ENCODE measurements at regions of chr22 and their contacts with region 1.

Region 1: GRCh38 chr22:42437488-42438292 is 5.5 kb upstream of the NFAM1 start:
- DNase-seq: peak; percentile 39
- ATAC-seq: peak; percentile 86
- H3K4me3 ChIP-seq: peak overlapping the region; percentile 46 to 53
- H3K27ac ChIP-seq: 0 out of 2 replicates have a peak overlapping the region, but pooled peaks have one; percentile 34
- H3K4me1 ChIP-seq: peaks cover 13% of the 10 kb centered on the region
- H3K27me3 ChIP-seq: no peaks in the 10 kb centered on the region
- CTCF ChIP-seq: peak; percentile 91

Region 2: DNA sequence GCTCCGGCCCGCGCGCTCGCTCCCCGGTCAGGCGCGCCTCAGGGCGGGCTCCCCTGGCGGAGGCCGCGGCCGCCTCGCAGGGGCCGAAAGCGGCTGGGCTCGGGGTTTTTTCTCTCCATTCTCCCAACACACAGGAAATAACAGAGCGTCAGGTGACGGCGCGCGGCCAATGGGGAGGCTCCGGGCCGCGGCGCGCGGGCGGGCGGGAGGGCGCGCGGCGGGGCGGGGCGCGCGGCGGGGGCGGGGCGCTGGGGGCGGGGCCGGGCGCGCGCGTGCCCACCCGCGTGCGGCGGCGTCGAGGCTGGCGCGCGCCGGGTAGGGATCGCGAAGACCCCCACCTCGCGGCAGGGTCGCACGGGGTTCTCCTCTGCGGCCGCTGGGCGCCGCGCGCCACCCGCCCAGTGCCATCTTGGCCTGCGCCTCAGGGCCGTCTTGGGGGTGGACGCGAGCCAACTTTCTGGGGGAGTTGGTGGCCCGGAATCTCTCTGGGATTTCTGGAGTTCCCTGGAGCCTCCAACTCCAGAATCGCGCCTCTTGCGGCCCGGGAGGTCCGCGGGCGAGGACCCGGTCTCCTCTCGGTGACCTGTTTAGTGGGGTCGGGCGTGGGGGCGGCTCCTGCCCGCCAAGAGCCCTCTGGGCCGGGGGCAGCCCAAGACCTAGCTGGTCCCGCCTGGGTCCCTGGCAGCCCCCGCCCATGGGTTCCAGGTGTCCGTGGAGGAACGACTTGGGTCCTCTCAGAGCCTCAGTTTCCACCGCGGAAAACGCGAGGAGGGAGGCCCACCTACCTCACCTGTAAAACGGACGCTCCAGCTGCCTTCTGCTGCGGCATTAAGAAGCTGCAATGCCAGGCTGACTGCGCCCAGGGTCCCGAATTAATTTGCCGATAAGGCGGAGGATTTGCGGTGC is 166.9 kb before region 1 on chr22 and contains the start of gene TCF20:
- CTCF ChIA-PET with region 1: interaction called, 8 read pairs
- POLR2A ChIA-PET with region 1: no interaction called
- in situ Hi-C with region 1: no loop called
- intact Hi-C with region 1: loop called (anchors 10 kb)
- DNase-seq: no peak
- ATAC-seq: peak; percentile 80
- H3K4me3 ChIP-seq: peak within 1 kb of the TSS; percentile 70 to 72
- H3K27ac ChIP-seq: peak within 1 kb of the TSS; percentile 80
- H3K4me1 ChIP-seq: peaks cover 32% of the 10 kb centered on the region
- H3K27me3 ChIP-seq: no peaks in the 10 kb centered on the region
- CTCF ChIP-seq: no peak
- total RNA-seq, gene TCF20: 79.8 TPM

Region 3: DNA sequence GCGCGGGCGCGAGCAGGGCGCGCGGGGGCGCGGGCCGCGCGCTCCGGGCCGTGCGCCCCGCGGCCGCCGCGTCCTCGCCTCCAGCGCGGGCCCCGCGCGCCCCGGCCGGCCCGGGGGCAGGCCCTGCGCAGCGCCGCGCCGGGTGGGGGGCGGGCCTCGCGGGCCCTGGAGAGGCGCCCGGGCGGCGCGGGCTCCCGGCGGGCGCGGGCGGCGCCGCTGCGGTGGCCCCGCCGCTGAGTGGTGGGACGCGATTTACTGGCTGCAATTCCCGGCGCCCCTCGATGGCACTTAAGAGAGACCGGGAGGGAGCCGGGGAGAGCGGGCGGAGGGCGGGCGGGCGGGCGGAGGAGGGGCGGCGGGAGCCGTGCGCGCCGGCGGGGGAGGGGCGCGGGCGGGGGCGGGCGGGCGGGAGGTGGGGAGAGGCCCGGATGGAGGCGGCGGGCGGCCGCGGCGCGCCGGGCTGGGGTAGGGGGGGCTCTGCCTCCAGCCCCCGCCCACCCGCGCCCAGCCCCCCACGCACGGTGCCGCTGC is 94.1 kb before region 1 on chr22:
- CTCF ChIA-PET with region 1: no interaction called
- POLR2A ChIA-PET with region 1: no interaction called
- in situ Hi-C with region 1: no loop called
- intact Hi-C with region 1: no loop called
- DNase-seq: no peak
- ATAC-seq: peak; percentile 76
- H3K4me3 ChIP-seq: no peak overlapping the region
- H3K27ac ChIP-seq: no peak overlapping the region
- H3K4me1 ChIP-seq: peaks cover 16% of the 10 kb centered on the region
- H3K27me3 ChIP-seq: no peaks in the 10 kb centered on the region
- CTCF ChIP-seq: no peak

Region 4: DNA sequence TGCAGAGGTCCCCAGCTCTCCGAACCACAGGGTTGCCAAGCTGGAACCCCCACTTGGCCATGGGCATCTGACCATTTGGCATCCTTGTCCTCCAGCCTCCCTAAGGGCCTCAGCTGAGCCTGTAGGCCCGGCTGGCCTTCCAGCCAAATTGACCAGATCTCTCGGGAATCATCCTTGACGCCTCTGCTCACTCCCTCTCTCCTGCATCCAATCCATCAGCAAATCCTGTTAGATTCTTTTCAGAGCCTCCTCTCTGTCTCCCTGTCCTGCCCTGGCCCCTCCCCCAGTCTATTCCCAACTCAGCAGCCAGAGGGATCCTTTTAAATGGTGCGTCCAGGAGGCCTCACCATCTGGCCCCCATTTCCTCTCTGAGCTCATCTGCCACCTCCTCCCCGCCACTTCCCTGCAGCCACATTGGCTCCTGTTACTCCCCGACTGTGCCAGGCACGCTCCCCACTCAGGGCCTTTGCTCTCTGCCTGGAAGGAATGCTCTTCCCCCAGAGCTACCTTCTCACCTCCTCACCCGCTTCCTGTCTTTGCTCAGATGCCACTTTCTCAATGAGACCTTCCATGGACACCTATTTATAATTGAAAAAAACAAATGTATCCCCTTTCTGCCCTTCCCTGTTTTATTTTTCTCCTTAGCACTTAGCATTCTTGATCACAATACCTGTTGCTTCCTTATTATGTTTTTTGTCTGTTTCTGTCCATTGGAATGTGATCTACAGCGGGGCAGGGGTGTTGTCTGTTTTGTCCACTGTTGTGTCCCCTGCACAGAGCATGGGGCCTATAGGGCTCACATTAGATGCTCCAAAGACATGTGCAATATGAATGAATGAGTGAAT is 83.6 kb before region 1 on chr22:
- CTCF ChIA-PET with region 1: no interaction called
- POLR2A ChIA-PET with region 1: interaction called, 11 read pairs
- in situ Hi-C with region 1: no loop called
- intact Hi-C with region 1: no loop called
- DNase-seq: no peak
- ATAC-seq: no peak
- H3K4me3 ChIP-seq: no peak overlapping the region
- H3K27ac ChIP-seq: no peak overlapping the region
- H3K4me1 ChIP-seq: peaks cover 13% of the 10 kb centered on the region
- H3K27me3 ChIP-seq: no peaks in the 10 kb centered on the region
- CTCF ChIP-seq: no peak

Region 5: DNA sequence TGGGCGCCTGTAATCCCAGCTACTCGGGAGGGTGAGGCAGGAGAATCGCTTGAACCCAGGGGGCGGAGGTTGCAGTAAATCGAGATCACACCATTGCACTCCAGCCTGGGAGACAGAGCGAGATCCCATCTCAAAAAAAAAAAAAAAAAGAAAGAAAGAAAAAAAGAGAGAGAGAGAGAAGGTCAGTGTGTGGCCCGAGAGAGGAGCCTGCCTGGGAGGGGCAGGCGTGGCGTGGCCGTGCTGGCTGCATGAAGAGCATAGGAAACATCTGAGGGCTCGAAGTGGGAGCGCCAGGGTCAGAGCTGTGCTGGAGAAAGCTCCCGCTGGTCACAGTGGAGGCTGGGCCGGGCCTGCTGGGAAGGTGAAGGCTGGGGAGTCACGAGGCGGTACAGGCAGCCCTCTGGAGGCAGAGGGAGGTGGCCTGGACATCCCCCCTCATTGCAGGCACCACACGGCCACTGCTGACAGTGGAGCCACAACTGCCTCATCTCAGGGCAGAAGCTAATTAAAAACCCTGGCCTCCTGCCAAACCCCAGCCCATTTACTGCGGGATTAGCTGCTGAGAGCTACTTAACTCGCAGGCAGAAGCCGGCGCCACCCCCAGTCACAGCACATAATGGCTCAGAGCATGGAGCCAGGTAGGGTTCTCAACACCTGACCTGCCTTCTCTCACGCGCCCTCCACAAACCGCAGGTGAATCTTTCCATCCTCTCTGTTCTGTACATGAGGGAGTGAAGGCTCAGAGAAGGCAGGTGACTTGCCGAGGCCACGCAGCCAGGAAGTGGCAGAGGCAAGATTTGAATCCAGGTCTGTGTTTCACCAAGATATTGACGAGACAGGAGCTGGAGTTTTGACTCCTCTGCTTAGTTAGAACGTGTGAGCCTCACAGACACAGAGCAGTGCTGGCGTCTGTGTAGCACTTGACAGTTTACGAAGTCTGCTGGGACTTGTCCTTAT is 38.1 kb before region 1 on chr22:
- CTCF ChIA-PET with region 1: no interaction called
- POLR2A ChIA-PET with region 1: no interaction called
- in situ Hi-C with region 1: no loop called
- intact Hi-C with region 1: no loop called
- DNase-seq: no peak
- ATAC-seq: no peak
- H3K4me3 ChIP-seq: no peak overlapping the region
- H3K27ac ChIP-seq: no peak overlapping the region
- H3K4me1 ChIP-seq: no peaks in the 10 kb centered on the region
- H3K27me3 ChIP-seq: no peaks in the 10 kb centered on the region
- CTCF ChIP-seq: no peak

Measured in Panc1 (cell line).